Cardiac septum (tissue), 1 donor: ENCODE measurements at regions of chr15 and their contacts with region 1.

Region 1: GRCh38 chr15:91824256-91824655 is 29.3 kb upstream of the SLCO3A1 start:
- DNase-seq: no peak

Region 2: GRCh38 chr15:91627473-91628278 is 196.6 kb before region 1 on chr15:
- intact Hi-C with region 1: loop called (anchors 10 kb)
- DNase-seq: no peak